Naive thymus-derived CD4-positive, alpha-beta T cell (primary cell): ENCODE measurements at regions of chr11 and their contacts with region 1.

Region 1: GRCh38 chr11:82718307-82718706 is 15.4 kb downstream of the FAM181B start:
- DNase-seq: peak in 5 of 9 donors; percentile 22 to 53 (median 34)
- ATAC-seq: peak; percentile 61
- H3K4me3 ChIP-seq: no peak overlapping the region
- H3K4me3 Mint-ChIP-seq: no peak overlapping the region
- H3K27ac ChIP-seq: no peak overlapping the region
- H3K27ac Mint-ChIP-seq: peak overlapping the region in 1 of 9 donors; percentile 87
- H3K4me1 ChIP-seq: no peaks in the 10 kb centered on the region
- H3K4me1 Mint-ChIP-seq: peaks cover 0 to 6% (median 4%) of the 10 kb centered on the region in 7 donors
- H3K27me3 ChIP-seq: no peaks in the 10 kb centered on the region
- H3K27me3 Mint-ChIP-seq: peaks cover 0 to 5% (median 0%) of the 10 kb centered on the region in 5 donors

Region 2: DNA sequence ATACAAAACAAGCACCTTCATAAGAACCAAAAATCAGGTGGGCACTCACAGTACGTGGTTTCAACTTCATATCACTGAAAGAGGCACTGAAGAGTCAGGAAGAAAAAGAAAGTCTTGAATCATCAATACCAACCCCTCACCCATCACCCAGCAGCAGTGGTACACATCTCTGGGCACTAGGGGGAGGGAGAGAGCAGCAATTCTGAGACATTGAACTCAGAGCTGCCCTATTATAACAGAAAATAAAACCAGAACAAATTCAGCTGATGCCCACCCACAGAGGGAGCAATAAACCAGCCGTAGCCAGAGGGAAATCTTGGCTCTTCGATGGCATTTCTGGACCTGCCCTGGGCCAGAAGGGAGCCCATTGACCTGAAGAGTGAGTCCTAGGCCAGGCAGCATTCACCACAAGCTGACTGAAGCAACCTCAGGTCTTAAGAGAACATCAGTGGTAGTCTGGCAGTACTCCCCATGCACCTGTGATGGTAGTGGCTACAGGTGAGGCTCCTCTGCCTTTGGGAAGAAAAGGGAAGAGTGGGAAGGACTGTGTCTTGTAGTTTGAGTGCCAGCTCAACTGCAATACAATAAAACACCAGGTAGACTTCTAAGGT is 57.5 kb after region 1 on chr11:
- CTCF ChIA-PET with region 1: no interaction called
- POLR2A ChIA-PET with region 1: no interaction called
- intact Hi-C with region 1: loop called in 1 of 2 experiments (anchors 1 kb)
- DNase-seq: peak in 7 of 9 donors; percentile 6 to 34 (median 16)
- ATAC-seq: peak; percentile 82
- H3K4me3 ChIP-seq: no peak overlapping the region
- H3K4me3 Mint-ChIP-seq: no peak overlapping the region
- H3K27ac ChIP-seq: no peak overlapping the region
- H3K27ac Mint-ChIP-seq: no peak overlapping the region
- H3K4me1 ChIP-seq: no peaks in the 10 kb centered on the region
- H3K4me1 Mint-ChIP-seq: peaks cover 0 to 2% (median 0%) of the 10 kb centered on the region in 7 donors
- H3K27me3 ChIP-seq: no peaks in the 10 kb centered on the region
- H3K27me3 Mint-ChIP-seq: peaks cover 0 to 33% (median 0%) of the 10 kb centered on the region in 5 donors

Region 3: GRCh38 chr11:82927254-82927880 is 209.1 kb after region 1 on chr11:
- CTCF ChIA-PET with region 1: no interaction called
- POLR2A ChIA-PET with region 1: no interaction called
- intact Hi-C with region 1: loop called in 1 of 2 experiments (anchors 1 kb)
- DNase-seq: peak in 7 of 9 donors; percentile 51 to 77 (median 67)
- ATAC-seq: peak; percentile 89
- H3K4me3 ChIP-seq: no peak overlapping the region
- H3K4me3 Mint-ChIP-seq: peak overlapping the region in 2 of 10 donors; percentile 10 to 63
- H3K27ac ChIP-seq: no peak overlapping the region
- H3K27ac Mint-ChIP-seq: peak overlapping the region in 8 of 9 donors; percentile 26 to 76 (median 52)
- H3K4me1 ChIP-seq: peaks cover 0 to 23% of the 10 kb centered on the region in 2 donors
- H3K4me1 Mint-ChIP-seq: peaks cover 10 to 55% (median 45%) of the 10 kb centered on the region in 7 donors
- H3K27me3 ChIP-seq: no peaks in the 10 kb centered on the region
- H3K27me3 Mint-ChIP-seq: no peaks in the 10 kb centered on the region

Region 4: GRCh38 chr11:83249972-83250593 is 531.8 kb after region 1 on chr11:
- CTCF ChIA-PET with region 1: interaction called, 3 read pairs
- POLR2A ChIA-PET with region 1: no interaction called
- intact Hi-C with region 1: loop called (anchors 1 kb)
- DNase-seq: peak in 7 of 9 donors; percentile 12 to 48 (median 40)
- ATAC-seq: peak; percentile 77
- H3K4me3 ChIP-seq: no peak overlapping the region
- H3K4me3 Mint-ChIP-seq: peak overlapping the region in 1 of 10 donors; percentile 32
- H3K27ac ChIP-seq: no peak overlapping the region
- H3K27ac Mint-ChIP-seq: no peak overlapping the region
- H3K4me1 ChIP-seq: no peaks in the 10 kb centered on the region
- H3K4me1 Mint-ChIP-seq: peaks cover 0 to 7% (median 0%) of the 10 kb centered on the region in 7 donors
- H3K27me3 ChIP-seq: no peaks in the 10 kb centered on the region
- H3K27me3 Mint-ChIP-seq: no peaks in the 10 kb centered on the region

Region 5: DNA sequence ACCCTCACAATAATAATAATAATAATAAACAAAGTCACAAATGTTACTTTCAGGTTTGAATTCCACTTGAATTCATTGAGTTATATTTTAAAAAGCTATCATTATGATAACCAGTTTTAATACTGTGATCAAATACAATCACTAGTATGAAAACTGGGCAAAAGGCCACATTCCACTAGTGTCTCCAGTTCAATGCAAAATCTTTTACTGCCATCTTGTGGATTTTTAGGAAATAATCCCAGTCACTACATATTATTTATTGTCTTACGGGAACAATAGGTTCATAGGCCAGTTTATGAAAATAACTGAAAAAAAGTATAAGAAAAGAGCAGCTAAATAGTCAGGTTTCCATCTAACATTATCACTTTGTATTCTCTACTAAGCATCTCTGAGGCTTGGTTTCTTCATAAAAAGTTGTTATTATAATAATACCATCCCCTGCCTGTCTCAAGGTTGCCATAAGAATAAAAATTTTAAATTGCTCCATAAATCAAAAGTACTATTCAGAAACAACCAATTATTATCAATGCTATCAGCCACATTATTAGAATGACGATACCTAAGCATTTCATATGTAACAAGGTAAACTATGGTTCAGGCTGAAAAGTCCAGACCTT is 1101.7 kb after region 1 on chr11:
- CTCF ChIA-PET with region 1: no interaction called
- POLR2A ChIA-PET with region 1: no interaction called
- intact Hi-C with region 1: loop called (anchors 1 to 5 kb)
- DNase-seq: peak in 5 of 9 donors; percentile 3 to 13 (median 10)
- ATAC-seq: no peak
- H3K4me3 ChIP-seq: no peak overlapping the region
- H3K4me3 Mint-ChIP-seq: no peak overlapping the region
- H3K27ac ChIP-seq: no peak overlapping the region
- H3K27ac Mint-ChIP-seq: no peak overlapping the region
- H3K4me1 ChIP-seq: no peaks in the 10 kb centered on the region
- H3K4me1 Mint-ChIP-seq: no peaks in the 10 kb centered on the region
- H3K27me3 ChIP-seq: no peaks in the 10 kb centered on the region
- H3K27me3 Mint-ChIP-seq: peaks cover 0 to 4% (median 3%) of the 10 kb centered on the region in 5 donors